ENCODE measurements at regions of chr20 and their contacts with region 1.

Region 1: DNA sequence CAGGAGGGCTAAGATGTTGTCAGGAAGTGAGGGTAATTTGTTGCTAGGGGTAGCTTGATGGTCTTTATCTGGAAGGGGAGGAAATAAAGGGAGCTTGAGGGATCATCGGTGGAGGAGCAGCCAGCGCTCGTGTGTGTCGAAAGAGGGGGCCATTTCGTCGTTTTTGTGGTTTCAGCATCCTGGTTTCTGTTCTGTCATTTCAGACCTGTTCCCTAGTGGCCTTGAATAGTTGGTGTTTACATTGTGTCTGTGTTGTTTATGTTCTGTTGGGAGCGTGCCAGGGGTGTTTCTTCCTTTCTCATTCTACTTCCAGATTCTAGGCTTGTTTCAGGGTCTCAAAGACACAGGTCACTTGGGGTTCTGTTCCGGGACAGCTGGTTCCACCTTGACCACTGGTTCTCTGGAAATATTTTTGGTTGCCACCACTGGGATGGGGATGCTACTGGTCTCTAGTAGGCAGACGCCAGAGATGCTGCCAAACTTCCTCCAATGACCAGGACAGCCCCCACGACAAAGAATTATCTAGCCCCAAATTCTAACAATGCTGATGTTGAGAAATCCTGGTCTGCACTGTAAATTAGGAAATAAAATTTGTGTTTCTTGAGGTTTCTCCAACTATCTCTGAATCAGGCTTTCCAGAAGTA is 113.9 kb upstream of the NAA20 start:
- DNase-seq: peak; percentile 25
- H3K4me3 ChIP-seq: no peak overlapping the region
- H3K27ac ChIP-seq: no peak overlapping the region
- H3K4me1 ChIP-seq: no peaks in the 10 kb centered on the region
- CTCF ChIP-seq: peak; percentile 43

Region 2: DNA sequence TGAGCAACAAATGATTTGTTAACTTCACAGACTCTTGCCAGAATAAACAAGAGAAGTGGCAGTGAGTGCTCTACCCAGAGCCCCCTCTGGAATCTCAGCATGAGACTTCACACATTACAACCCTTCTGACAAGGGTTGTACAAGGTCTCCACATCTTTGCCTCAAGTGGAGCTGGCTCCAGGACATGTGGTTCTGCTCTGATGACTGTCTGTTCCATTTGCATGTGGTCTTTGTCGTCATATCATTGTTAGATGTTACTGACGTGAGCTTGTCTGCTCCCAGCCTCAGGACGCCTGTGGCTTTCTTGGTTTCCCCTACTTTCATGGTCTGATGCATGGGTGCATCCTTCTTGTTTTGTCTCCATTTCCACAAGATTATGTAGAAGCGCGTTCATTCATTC is 575.9 kb before region 1 on chr20:
- CTCF ChIA-PET with region 1: no interaction called
- POLR2A ChIA-PET with region 1: no interaction called
- intact Hi-C with region 1: no loop called
- DNase-seq: no peak
- H3K4me3 ChIP-seq: no peak overlapping the region
- H3K27ac ChIP-seq: no peak overlapping the region
- H3K4me1 ChIP-seq: no peaks in the 10 kb centered on the region
- CTCF ChIP-seq: no peak

Region 3: DNA sequence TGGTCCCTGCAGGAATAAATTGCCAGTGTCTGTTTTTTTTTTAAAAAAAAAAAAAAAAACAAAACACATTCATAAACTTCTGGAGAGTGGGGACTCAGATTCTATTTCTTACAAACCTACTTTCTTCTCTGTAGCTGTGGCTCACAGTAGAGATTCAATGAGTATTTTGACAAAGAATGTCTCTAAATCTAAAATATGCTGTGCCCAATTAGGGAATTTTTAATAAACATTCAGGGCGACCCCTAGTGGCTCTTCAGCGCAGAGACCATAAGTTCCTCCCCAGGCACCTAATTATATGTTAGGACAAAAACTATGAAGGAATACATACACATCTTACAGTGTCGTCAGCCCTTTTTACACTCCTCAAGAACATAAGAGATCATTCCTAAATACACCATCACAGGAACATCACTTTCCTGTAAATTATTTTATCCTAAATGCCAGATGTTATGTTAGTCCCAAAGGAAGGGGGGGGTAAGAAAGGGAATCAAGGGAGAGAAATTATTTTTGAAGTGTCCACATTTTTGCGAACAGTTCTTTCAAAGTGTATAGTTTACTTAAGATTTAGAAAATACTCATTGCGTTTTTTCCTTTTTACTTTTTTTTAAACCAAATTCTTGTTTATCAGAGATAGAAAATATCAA is 92.1 kb after region 1 on chr20:
- CTCF ChIA-PET with region 1: no interaction called
- POLR2A ChIA-PET with region 1: no interaction called
- intact Hi-C with region 1: loop called (anchors 1 kb)
- DNase-seq: peak; percentile 57
- H3K4me3 ChIP-seq: no peak overlapping the region
- H3K27ac ChIP-seq: no peak overlapping the region
- H3K4me1 ChIP-seq: no peaks in the 10 kb centered on the region
- CTCF ChIP-seq: peak; percentile 94

Measured in OCI-LY7 (cell line).